HEK293T (cell line): ENCODE measurements at regions of chr9 and their contacts with region 1.

Region 1: DNA sequence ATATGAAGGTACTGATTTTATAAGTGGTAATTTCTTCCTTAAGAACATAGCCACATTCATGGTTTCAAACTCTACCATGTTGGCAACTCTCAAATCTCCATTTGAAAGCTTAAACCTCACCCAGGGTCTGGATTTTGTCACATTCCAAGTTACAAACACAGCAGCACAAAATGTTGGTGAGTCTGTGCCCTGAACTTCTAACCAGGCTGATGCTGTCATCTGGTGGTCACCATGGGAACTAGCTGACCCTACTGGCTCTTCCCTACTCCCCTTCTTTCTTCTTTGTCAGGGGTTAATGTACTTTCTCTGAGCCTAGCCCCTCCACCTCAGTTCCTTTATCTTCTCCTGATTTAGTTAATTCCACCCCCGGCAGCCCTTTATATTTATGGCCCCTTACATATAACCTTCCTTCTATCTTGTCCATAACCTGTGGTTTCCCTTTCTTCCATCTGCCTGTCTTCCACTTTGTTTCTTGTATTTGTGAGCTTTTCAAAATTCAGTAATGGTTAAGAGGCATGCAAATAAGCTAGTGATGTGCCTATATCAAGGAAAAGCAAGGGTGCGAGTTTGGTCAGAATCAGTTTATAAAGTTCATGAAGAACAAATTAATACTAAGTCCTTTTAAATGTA is 35.9 kb downstream of the TGFBR1 start:
- DNase-seq: peak; percentile 57

Region 2: DNA sequence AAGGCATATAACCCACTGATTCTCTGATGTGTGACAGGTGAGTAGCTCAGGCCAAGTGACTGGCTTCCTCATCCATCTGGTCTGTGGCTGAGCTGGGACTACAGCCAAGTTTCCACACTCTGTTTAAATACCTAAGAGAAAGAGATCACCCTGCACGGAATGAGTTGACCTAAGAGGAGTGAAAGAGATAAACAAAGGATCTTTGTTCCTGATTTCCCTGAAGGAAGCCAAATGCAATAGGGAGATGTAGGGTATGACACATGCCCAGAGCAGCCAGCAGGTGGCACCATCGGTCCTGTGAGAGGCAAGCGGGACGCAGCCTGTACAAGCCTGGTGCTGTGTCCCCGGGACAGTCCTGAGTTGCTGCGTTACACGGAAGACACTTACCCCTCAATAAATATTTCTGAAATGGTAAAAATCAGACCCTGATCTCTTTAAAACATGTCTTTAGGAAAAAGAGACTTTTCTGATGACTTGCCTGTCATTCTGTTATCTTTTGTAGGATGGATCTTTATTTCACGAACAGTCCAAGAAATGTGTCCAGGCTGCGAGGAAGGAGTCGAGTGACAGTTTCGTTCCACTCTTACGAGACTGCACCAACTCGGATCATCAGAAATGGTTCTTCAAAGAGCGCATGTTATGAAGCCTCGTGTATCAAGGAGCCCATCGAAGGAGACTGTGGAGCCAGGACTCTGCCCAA is 292.2 kb before region 1 on chr9:
- CTCF ChIA-PET with region 1: interaction called, 12 read pairs
- POLR2A ChIA-PET with region 1: interaction called, 3 read pairs
- DNase-seq: peak; percentile 87

Region 3: DNA sequence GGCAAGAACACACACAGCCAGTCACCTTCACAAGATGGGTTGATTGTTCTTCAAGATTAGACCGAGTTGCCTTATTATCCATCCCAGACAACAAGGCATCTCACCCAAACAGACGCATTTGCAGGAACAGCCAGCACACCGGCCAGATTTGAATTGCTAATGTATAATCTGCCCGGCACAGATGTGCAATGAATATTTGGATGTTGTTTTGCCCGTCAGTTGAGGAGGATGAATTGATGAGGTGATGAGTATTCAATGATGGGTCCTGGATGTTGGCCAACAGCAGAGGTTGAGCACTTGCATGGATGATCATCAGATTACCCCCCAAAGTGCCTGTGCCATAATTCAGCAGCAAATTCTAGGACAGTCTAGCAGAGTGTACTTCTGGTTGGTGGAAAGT is 60.8 kb after region 1 on chr9:
- CTCF ChIA-PET with region 1: no interaction called
- POLR2A ChIA-PET with region 1: no interaction called
- DNase-seq: no peak